IMR-90 (cell line): ENCODE measurements at regions of chr9 and their contacts with region 1.

Region 1: DNA sequence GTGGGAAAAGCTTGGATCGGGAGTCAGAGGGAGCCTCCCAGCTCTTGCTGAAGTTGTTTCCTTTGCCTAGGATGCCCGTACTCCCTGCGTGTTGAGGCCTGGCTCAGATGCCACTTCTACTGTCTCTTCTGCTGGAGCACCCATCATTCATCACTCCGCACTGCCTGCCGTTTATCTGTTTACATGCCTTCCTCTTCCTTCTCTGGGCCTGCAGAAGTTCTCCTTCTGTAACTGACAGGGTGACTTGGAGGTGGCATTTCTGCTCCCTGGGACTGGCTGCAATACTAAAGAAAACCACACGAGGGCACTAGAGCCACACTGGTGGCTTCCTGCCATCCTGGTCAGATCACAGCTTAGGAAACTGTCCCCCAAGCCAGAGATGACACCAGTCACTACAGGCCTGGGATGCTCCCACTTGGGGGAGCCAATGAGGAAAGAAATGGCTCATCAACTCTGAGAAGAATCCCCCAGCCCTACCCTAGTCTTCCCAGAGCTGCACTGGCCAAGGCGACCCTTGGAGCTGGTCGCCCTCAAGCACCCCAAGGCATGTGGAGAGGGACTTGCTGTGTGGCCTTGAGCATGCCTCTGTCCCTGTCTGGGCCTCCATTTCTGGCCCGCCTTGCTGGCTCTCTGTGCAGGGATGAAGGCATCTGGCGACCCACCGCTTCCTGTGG is 9.7 kb upstream of the SLC25A51 start:
- DNase-seq: peak; percentile 72
- ATAC-seq: peak; percentile 90
- H3K4me3 ChIP-seq: no peak overlapping the region
- H3K27ac ChIP-seq: no peak overlapping the region
- H3K4me1 ChIP-seq: peaks cover 17% of the 10 kb centered on the region
- H3K27me3 ChIP-seq: no peaks in the 10 kb centered on the region
- CTCF ChIP-seq: peak; percentile 98
- POLR2A ChIP-seq: peak; percentile 60
- RAD21 ChIP-seq: peak; percentile 100

Region 2: DNA sequence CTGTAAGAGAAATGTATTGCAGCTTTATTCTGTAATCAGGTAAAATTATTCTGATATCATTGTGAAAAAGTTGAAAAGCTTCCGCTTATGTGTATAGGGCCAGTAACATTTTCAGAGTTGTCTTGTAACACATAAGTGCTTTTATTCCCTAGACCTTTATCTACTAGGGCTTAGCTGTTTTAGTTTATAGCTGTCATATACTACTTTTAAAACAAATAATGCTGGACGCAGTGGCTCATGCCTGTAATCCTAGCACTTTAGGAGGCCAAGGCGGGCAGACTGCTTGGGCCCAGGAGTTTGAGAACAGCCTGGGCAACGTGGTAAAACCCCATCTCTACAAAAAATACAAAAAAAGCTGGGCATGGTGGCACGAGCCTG is 42.8 kb before region 1 on chr9:
- CTCF ChIA-PET with region 1: no interaction called
- POLR2A ChIA-PET with region 1: no interaction called
- dilution Hi-C with region 1: no loop called
- in situ Hi-C with region 1: no loop called
- intact Hi-C with region 1: no loop called
- DNase-seq: no peak
- ATAC-seq: no peak
- H3K4me3 ChIP-seq: no peak overlapping the region
- H3K27ac ChIP-seq: no peak overlapping the region
- H3K4me1 ChIP-seq: no peaks in the 10 kb centered on the region; the same call in 1 of the 2 replicates
- H3K27me3 ChIP-seq: no peaks in the 10 kb centered on the region
- CTCF ChIP-seq: no peak
- POLR2A ChIP-seq: no peak
- RAD21 ChIP-seq: no peak

Region 3: DNA sequence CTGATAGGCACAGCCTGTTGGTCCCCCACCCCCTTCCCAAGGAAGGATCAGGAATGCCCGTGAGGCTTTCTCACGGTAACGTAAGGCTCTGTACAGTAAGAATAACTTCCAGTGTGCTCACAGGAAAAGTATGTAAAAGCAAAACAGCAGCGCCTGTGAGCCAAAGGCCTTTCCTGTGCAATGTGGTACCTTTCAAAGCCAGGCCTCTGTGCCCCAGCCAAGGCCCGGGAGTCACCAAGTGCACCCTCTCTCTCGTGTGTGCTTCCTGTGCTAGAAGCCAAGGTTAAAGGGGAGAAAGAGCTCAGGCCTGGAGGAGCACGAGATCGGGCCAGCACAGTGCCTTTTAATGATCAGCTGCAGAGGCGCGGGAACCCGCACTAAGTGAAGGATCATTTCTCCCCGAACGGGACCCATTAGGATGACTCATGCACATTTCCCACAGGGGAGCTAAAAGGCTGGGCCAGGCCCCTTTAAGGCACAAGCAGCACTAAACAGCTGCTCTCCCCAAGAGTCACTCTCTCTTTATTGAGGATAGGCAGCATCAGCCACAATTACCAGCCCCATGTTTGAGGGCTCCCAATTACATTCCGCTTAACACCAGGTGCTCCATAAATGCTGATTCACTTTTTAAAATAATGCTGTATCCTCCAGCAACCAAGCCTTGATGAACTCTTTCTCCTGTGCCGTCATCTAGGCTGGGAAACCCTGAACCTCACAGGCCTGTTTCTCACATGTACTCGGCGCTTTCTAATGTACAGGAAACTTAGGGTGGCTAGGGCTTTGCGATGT is 112.6 kb after region 1 on chr9:
- CTCF ChIA-PET with region 1: no interaction called
- POLR2A ChIA-PET with region 1: interaction called, 13 read pairs
- dilution Hi-C with region 1: no loop called
- in situ Hi-C with region 1: no loop called
- intact Hi-C with region 1: no loop called
- DNase-seq: peak; percentile 98
- ATAC-seq: peak; percentile 77
- H3K4me3 ChIP-seq: no peak overlapping the region
- H3K27ac ChIP-seq: peak overlapping the region; percentile 96
- H3K4me1 ChIP-seq: peaks cover 59% of the 10 kb centered on the region
- H3K27me3 ChIP-seq: no peaks in the 10 kb centered on the region
- CTCF ChIP-seq: no peak
- POLR2A ChIP-seq: no peak; the same call in 1 of the 2 replicates
- RAD21 ChIP-seq: peak; percentile 28

Region 4: DNA sequence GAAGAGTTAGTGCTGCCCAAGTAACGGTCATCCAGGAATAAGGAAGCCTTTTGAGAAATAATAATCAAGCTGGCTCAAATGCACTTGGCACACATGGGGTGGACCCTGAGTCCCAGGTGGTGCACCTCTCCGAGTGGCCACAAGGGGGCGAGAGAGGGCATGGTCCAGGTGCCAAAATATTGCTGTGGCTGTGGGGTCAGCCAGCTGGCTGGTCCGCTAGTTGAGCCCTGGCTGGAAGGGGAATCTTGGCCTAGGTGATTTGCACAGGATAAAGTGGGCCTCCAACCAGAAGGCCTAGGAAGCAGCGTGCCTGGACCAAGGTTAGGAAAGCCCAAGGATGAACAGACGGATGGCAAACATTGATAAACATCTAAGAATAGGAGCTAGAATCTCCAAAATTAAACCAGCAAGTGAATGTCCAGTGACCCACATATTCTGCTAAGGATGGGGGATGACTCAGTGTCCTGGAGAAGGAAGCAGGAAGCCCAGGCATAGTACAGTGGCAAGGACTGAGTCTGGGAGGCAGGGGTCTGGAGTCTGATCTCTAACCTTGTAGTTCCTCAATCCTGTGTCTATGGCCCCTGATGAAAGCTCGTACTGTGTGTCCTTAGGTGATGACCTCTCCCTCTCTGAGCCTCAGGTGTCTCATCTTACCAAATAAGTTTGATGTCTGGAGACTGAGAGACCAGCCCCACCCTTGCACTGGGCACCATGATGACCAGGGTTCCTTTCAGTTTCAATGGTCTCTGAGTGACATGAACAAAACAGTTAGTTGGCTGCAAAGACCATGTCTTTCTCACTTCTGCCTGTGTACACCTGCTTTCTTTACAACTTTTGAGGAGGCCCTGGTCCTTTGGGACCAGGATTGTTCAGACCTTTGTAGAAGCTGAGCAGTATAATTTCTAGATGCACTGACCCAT is 174.6 kb after region 1 on chr9:
- CTCF ChIA-PET with region 1: interaction called, 6 read pairs
- POLR2A ChIA-PET with region 1: no interaction called
- dilution Hi-C with region 1: no loop called
- in situ Hi-C with region 1: no loop called
- intact Hi-C with region 1: loop called (anchors 1 kb)
- DNase-seq: peak; percentile 37
- ATAC-seq: peak; percentile 84
- H3K4me3 ChIP-seq: no peak overlapping the region
- H3K27ac ChIP-seq: no peak overlapping the region
- H3K4me1 ChIP-seq: peaks cover 2% of the 10 kb centered on the region; the same call in 1 of the 2 replicates
- H3K27me3 ChIP-seq: no peaks in the 10 kb centered on the region
- CTCF ChIP-seq: peak; percentile 80
- POLR2A ChIP-seq: no peak
- RAD21 ChIP-seq: peak; percentile 77

Region 5: DNA sequence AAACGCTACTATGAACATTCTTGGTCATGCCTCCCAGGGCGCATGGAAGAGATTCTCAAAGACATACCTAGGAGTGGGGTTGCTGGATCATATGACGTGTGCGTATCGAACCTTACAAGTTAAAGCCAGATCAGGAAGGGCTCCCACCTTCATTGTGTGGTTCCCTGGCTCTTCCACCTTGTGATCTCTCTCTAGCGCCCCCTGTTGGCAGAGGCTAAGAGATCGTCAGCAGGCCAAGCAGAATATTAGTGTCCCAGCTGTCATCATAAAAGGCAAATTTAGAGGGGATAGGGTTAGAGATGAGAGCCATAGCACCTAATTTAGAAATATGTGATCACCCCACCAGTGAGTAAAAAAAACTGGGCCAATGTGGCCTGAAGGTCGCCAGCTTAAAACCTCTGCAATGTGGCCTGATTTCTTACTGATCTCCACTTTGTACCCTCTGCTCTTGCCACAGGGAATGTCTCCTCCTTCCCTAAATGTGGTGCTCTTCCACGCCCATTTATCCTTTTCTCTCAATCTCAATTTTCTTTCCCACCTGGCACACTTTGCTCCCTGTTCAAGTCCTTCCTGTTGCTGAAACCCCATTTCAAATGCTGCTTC is 247.1 kb after region 1 on chr9:
- CTCF ChIA-PET with region 1: no interaction called
- POLR2A ChIA-PET with region 1: no interaction called
- dilution Hi-C with region 1: no loop called
- in situ Hi-C with region 1: loop called (anchors 5 kb)
- intact Hi-C with region 1: loop called (anchors 1 kb)
- DNase-seq: peak; percentile 51
- ATAC-seq: peak; percentile 73
- H3K4me3 ChIP-seq: no peak overlapping the region
- H3K27ac ChIP-seq: no peak overlapping the region
- H3K4me1 ChIP-seq: no peaks in the 10 kb centered on the region
- H3K27me3 ChIP-seq: peaks cover 20% of the 10 kb centered on the region
- CTCF ChIP-seq: peak; percentile 75
- POLR2A ChIP-seq: no peak
- RAD21 ChIP-seq: peak; percentile 67

Region 6: DNA sequence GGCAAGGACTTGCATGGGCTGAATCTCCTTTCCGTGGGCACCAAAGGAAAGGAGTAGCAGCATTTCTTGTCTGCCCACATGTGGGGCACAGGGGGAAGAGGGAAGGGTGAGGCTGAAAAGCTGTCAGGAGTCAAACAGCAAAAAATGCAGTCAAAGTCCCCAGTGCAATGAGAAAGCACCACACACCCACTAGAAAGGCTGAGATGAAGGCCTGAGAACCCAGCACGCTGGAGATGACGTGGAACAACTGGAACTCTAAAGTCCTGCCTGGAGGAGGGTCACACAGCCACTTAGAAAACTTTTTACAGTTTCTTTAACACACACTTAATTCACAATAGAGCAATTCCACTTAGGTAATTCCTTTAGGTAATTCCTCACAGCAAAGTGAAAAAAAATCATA is 605.2 kb after region 1 on chr9:
- CTCF ChIA-PET with region 1: no interaction called
- POLR2A ChIA-PET with region 1: interaction called, 10 read pairs
- dilution Hi-C with region 1: no loop called
- in situ Hi-C with region 1: no loop called
- intact Hi-C with region 1: no loop called
- DNase-seq: no peak
- ATAC-seq: no peak
- H3K4me3 ChIP-seq: no peak overlapping the region
- H3K27ac ChIP-seq: no peak overlapping the region
- H3K4me1 ChIP-seq: no peaks in the 10 kb centered on the region
- H3K27me3 ChIP-seq: 0 out of 2 replicates have a peak, but pooled peaks cover 1% of the 10 kb centered on the region
- CTCF ChIP-seq: no peak
- POLR2A ChIP-seq: no peak
- RAD21 ChIP-seq: no peak